ENCODE measurements at regions of chr17 and their contacts with region 1.

Region 1: DNA sequence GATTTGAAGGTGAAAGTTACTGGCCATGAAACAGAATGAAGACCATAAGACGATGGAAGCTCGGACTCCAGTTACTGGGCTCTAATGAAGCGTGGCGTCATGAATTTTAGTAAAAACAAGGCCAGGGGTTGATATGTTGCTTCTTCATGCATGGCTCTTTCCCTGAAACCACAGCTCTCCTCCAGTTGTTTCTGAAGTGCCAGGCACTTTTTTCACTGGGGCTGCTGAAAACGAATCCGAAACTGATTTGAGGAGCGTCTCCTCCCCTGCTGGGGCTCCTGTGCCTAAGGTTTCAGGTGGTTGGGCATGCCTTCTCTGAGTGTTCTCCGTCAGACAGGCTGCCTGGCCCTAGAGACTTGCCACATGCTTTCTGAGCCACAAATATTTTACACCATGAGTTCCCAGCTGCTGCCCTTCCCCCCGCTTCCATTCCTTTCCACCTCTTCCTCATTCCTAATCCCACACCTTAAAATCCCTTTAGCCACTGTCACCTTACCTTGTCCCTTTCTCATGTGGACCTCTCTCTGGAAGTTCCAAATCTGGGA is 3.7 kb upstream of the MYL4 start:
- DNase-seq: peak; percentile 45
- ATAC-seq: peak; percentile 78
- H3K4me3 Mint-ChIP-seq: peak overlapping the region; percentile 80
- H3K27ac Mint-ChIP-seq: peak overlapping the region; percentile 98
- H3K4me1 Mint-ChIP-seq: peaks cover 74% of the 10 kb centered on the region
- H3K27me3 Mint-ChIP-seq: no peaks in the 10 kb centered on the region
- CTCF ChIP-seq: no peak

Region 2: DNA sequence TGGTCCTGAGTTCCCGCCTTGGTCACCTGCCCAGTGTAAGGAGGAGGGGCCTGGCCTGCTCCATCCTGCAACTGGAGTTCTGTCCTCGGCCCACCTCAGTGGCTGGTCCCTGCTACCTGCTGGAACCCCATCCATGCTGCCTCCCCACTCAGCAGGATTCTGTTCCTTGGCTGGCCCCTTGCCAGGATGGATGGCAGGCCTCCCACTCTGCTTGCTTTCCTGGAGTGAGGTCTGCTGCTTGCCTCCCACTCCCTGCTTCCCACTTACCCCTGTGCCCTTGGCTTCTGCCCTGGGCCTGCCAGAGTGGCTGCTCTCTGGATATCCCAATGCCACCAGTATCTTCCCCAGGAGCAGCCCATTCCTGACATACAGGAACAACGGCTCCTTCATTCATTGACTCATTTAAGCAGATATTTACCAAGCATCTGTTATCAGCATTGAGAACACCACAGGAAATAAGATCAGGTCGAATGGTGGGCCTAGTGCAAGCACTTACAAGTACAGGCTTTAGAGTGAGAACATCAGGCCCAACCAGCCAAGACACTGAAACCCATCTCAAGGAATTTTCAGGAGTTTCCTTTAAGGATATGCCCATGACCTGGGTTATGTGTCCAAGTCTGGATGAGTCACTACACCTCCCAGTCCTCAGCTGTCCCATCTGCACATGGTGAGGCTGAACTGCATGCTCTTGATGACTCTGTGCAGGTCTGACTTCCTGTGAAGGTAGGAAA is 209.5 kb before region 1 on chr17:
- CTCF ChIA-PET with region 1: no interaction called
- POLR2A ChIA-PET with region 1: no interaction called
- intact Hi-C with region 1: no loop called
- DNase-seq: no peak
- ATAC-seq: no peak
- H3K4me3 Mint-ChIP-seq: no peak overlapping the region
- H3K27ac Mint-ChIP-seq: no peak overlapping the region
- H3K4me1 Mint-ChIP-seq: peaks cover 34% of the 10 kb centered on the region
- H3K27me3 Mint-ChIP-seq: no peaks in the 10 kb centered on the region
- CTCF ChIP-seq: no peak

Region 3: DNA sequence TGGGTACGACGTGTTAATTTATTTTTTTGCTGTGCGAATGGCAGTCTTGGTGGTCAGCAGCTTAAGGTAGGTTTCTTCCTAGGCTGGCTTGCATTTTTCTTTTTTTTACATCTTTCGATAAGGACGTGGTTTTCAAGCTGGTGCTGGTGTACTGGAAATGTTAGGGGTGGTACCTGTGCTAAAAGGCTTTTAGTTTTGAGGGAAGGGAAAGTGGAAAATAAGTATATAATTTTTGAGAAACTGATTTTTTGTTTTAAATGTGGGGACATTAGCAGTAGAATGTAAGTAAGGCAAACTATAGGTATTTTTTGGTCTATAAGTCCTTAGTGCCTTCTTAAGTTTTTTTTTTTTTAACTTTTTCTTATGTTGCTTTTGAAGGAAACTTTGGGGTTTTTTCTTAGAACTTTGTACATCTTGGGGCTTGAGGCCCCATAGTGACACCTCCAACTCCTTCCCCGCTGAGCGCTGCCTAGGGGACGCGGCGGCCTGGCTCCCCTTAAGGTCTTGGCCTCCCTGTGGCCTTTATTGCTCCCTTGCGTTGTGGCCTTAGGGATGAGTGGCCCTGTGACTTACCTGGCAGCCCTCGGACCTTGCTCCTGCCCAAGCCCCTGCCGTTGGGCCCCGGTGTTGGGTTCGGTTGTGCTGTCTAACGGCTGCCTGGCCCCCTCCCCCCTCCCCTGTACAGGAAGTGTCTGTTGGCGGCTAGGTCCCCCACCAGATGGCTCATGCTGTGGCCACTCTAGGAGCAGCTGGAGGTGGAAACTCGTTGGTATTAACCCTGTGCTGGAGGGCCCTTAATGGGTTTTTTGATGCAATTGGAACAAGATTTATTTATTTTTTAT is 138.4 kb before region 1 on chr17:
- CTCF ChIA-PET with region 1: no interaction called
- POLR2A ChIA-PET with region 1: no interaction called
- intact Hi-C with region 1: loop called (anchors 5 kb)
- DNase-seq: peak; percentile 61
- ATAC-seq: peak; percentile 99
- H3K4me3 Mint-ChIP-seq: peak overlapping the region; percentile 96
- H3K27ac Mint-ChIP-seq: peak overlapping the region; percentile 95
- H3K4me1 Mint-ChIP-seq: peaks cover 35% of the 10 kb centered on the region
- H3K27me3 Mint-ChIP-seq: no peaks in the 10 kb centered on the region
- CTCF ChIP-seq: no peak

Region 4: GRCh38 chr17:47172698-47173565 is 32.6 kb before region 1 on chr17:
- CTCF ChIA-PET with region 1: no interaction called
- POLR2A ChIA-PET with region 1: interaction called, 4 read pairs
- intact Hi-C with region 1: loop called (anchors 5 kb)
- DNase-seq: no peak
- ATAC-seq: no peak
- H3K4me3 Mint-ChIP-seq: no peak overlapping the region
- H3K27ac Mint-ChIP-seq: no peak overlapping the region
- H3K4me1 Mint-ChIP-seq: peaks cover 32% of the 10 kb centered on the region
- H3K27me3 Mint-ChIP-seq: no peaks in the 10 kb centered on the region
- CTCF ChIP-seq: no peak

Region 5: GRCh38 chr17:47188876-47189731 is 16.4 kb before region 1 on chr17 and contains the start of gene CDC27:
- CTCF ChIA-PET with region 1: interaction called, 3 read pairs
- POLR2A ChIA-PET with region 1: interaction called, 50 read pairs
- intact Hi-C with region 1: loop called (anchors 1 kb)
- DNase-seq: peak; percentile 99
- ATAC-seq: peak; percentile 92
- H3K4me3 Mint-ChIP-seq: peak within 1 kb of the TSS; percentile 94
- H3K27ac Mint-ChIP-seq: peak within 1 kb of the TSS; percentile 92
- H3K4me1 Mint-ChIP-seq: peaks cover 57% of the 10 kb centered on the region
- H3K27me3 Mint-ChIP-seq: no peaks in the 10 kb centered on the region
- CTCF ChIP-seq: no peak
- total RNA-seq, gene CDC27: 72.5 and 76.5 TPM in 2 replicates

Region 6: GRCh38 chr17:47218896-47219430 is 13.5 kb after region 1 on chr17:
- CTCF ChIA-PET with region 1: interaction called, 3 read pairs
- POLR2A ChIA-PET with region 1: interaction called, 4 read pairs
- intact Hi-C with region 1: loop called (anchors 1 kb)
- DNase-seq: no peak
- ATAC-seq: peak; percentile 37
- H3K4me3 Mint-ChIP-seq: no peak overlapping the region
- H3K27ac Mint-ChIP-seq: no peak overlapping the region
- H3K4me1 Mint-ChIP-seq: peaks cover 41% of the 10 kb centered on the region
- H3K27me3 Mint-ChIP-seq: no peaks in the 10 kb centered on the region
- CTCF ChIP-seq: no peak

Region 7: DNA sequence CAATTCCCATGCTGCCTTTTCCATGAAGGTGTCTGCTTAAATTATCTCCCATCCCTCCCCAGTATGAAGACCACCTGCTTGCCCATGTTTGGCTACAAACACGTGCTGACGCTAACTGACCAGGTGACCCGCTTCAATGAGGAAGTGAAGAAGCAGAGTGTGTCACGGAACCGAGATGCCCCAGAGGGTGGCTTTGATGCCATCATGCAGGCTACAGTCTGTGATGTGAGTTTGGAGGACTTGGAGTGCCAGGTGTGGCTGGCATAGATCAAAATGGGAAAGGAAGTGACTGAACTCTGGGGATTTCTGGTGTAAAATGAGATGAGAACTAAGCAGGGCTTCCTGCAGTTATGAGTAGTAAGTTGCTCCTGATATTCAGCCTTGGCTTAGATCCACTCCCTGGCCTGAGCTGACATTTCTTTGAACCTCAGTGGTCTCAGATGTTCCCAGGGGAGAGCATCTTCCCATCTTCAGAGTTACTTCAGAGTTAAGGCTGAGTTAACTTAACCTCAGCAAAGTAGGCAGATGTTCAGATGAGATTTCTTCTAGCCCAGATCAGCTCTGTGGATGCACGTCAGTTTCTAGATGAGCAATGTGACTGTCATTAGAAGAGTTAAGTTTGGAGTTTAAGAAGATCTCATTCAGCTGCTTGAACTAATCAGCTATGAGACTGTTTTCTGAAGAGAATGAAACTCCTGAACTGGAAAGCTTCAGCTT is 80.9 kb after region 1 on chr17:
- CTCF ChIA-PET with region 1: no interaction called
- POLR2A ChIA-PET with region 1: interaction called, 7 read pairs
- intact Hi-C with region 1: loop called (anchors 1 kb)
- DNase-seq: peak; percentile 50
- ATAC-seq: peak; percentile 84
- H3K4me3 Mint-ChIP-seq: peak overlapping the region; percentile 57
- H3K27ac Mint-ChIP-seq: peak overlapping the region; percentile 92
- H3K4me1 Mint-ChIP-seq: peaks cover 54% of the 10 kb centered on the region
- H3K27me3 Mint-ChIP-seq: no peaks in the 10 kb centered on the region
- CTCF ChIP-seq: no peak

Measured in activated B cell treated with CpG ODN at 0.5 μM for 24 hours (primary cell).